Naive thymus-derived CD4-positive, alpha-beta T cell (primary cell): ENCODE measurements at regions of chr4 and their contacts with region 1.

Region 1: GRCh38 chr4:2172161-2172560 is 69.8 kb downstream of the HAUS3 start:
- DNase-seq: peak in 1 of 9 donors; percentile 30
- ATAC-seq: no peak
- H3K4me3 ChIP-seq: no peak overlapping the region
- H3K4me3 Mint-ChIP-seq: peak overlapping the region in 7 of 10 donors; percentile 13 to 76 (median 64)
- H3K27ac ChIP-seq: no peak overlapping the region
- H3K27ac Mint-ChIP-seq: peak overlapping the region in 5 of 9 donors; percentile 1 to 93 (median 61)
- H3K4me1 ChIP-seq: peaks cover 0 to 8% of the 10 kb centered on the region in 2 donors
- H3K4me1 Mint-ChIP-seq: peaks cover 8 to 86% (median 25%) of the 10 kb centered on the region in 7 donors
- H3K27me3 ChIP-seq: no peaks in the 10 kb centered on the region
- H3K27me3 Mint-ChIP-seq: no peaks in the 10 kb centered on the region

Region 2: DNA sequence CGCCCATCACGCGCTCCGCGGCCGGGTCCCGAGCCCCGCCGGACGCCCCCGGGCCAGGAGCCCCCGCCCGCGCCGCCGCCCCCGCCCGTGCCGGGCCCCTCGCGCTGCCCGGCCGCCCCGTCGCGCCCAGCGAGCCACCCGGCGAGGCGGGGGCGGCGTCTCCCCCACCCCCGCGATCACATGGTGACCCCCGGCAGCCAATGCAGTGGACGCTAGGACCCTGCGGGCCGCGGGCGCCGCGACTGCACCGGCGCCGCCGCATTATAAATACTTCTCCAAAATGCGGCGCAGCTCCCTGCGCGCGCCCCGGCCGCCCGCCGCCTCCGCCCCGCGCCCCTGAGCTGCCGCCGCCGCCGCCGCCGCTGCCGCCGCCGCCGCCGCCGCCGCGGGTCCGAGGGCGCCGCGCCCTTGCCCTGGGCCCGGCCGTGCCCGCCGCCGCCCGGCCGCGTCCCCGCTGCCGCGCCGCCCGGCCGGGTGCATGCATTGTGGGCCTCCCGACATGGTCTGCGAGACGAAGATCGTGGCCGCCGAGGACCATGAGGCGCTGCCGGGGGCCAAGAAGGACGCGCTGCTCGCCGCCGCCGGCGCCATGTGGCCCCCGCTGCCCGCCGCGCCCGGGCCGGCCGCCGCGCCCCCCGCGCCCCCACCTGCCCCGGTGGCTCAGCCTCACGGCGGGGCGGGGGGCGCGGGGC is 113.0 kb before region 1 on chr4 and contains the start of gene NAT8L:
- CTCF ChIA-PET with region 1: no interaction called
- POLR2A ChIA-PET with region 1: no interaction called
- intact Hi-C with region 1: loop called in 1 of 2 experiments (anchors 5 kb)
- DNase-seq: peak in 1 of 9 donors; percentile 59
- ATAC-seq: peak; percentile 55
- H3K4me3 ChIP-seq: no peak within 1 kb of the TSS
- H3K4me3 Mint-ChIP-seq: peak within 1 kb of the TSS in 7 of 10 donors; percentile 17 to 70 (median 38)
- H3K27ac ChIP-seq: no peak within 1 kb of the TSS
- H3K27ac Mint-ChIP-seq: no peak within 1 kb of the TSS
- H3K4me1 ChIP-seq: no peaks in the 10 kb centered on the region
- H3K4me1 Mint-ChIP-seq: peaks cover 0 to 6% (median 0%) of the 10 kb centered on the region in 7 donors
- H3K27me3 ChIP-seq: peaks cover 0 to 3% of the 10 kb centered on the region in 2 donors
- H3K27me3 Mint-ChIP-seq: peaks cover 22 to 40% (median 29%) of the 10 kb centered on the region in 5 donors
- total RNA-seq, gene NAT8L: 0.11 to 7.2 (median 0.24) TPM in 3 of 5 experiments, not detected in the others

Region 3: DNA sequence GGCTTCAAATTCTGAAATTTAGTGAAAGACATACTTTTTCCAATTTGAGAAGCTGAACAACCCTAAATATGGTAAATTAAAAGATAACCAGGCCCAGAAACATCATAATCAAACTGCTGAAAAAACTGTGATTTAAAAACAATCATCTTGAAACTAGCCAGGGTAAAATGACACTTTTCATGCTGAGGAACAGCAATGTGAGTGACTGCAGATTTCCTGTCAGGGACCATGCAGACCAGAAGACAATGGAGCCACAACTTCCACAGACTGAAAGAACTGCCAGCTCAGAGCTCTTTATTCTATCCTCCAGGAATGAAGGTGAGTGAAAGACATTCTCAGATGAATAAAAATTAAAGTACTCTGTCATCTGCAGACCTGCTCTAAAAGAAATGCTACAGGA is 39.7 kb before region 1 on chr4:
- CTCF ChIA-PET with region 1: no interaction called
- POLR2A ChIA-PET with region 1: no interaction called
- intact Hi-C with region 1: loop called in 1 of 2 experiments (anchors 2 kb)
- DNase-seq: no peak
- ATAC-seq: no peak
- H3K4me3 ChIP-seq: no peak overlapping the region
- H3K4me3 Mint-ChIP-seq: no peak overlapping the region
- H3K27ac ChIP-seq: no peak overlapping the region
- H3K27ac Mint-ChIP-seq: peak overlapping the region in 1 of 9 donors; percentile 13
- H3K4me1 ChIP-seq: peaks cover 0 to 14% of the 10 kb centered on the region in 2 donors
- H3K4me1 Mint-ChIP-seq: peaks cover 10 to 38% (median 20%) of the 10 kb centered on the region in 7 donors
- H3K27me3 ChIP-seq: no peaks in the 10 kb centered on the region
- H3K27me3 Mint-ChIP-seq: peaks cover 0 to 2% (median 0%) of the 10 kb centered on the region in 5 donors

Region 4: GRCh38 chr4:2154215-2154740 is 17.9 kb before region 1 on chr4:
- CTCF ChIA-PET with region 1: no interaction called
- POLR2A ChIA-PET with region 1: no interaction called
- intact Hi-C with region 1: no loop called
- DNase-seq: no peak
- ATAC-seq: no peak
- H3K4me3 ChIP-seq: no peak overlapping the region
- H3K4me3 Mint-ChIP-seq: no peak overlapping the region
- H3K27ac ChIP-seq: no peak overlapping the region
- H3K27ac Mint-ChIP-seq: no peak overlapping the region
- H3K4me1 ChIP-seq: no peaks in the 10 kb centered on the region
- H3K4me1 Mint-ChIP-seq: peaks cover 0 to 1% (median 0%) of the 10 kb centered on the region in 7 donors
- H3K27me3 ChIP-seq: no peaks in the 10 kb centered on the region
- H3K27me3 Mint-ChIP-seq: peaks cover 0 to 12% (median 0%) of the 10 kb centered on the region in 5 donors

Region 5: DNA sequence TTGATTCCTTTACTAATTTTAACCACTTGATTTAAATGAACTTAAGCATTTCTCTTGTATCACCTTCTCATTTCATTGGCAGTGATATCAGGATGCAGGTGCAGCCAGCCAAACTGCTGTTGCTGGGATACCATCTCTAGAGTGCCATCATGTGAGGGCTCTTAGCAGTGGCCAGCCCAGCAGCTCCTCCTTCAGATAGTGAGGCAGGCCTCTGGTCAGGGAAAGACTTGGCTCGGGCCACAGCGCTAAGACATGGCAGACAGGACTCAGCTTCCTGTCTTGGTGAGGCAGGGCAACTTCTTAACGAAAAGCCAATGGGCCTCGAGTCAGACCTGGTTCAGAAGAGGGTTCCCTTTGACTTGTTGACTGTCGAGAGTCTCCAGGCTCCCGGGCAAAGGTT is 741.0 kb after region 1 on chr4:
- CTCF ChIA-PET with region 1: no interaction called
- POLR2A ChIA-PET with region 1: no interaction called
- intact Hi-C with region 1: no loop called
- DNase-seq: no peak
- ATAC-seq: no peak
- H3K4me3 ChIP-seq: no peak overlapping the region
- H3K4me3 Mint-ChIP-seq: no peak overlapping the region
- H3K27ac ChIP-seq: no peak overlapping the region
- H3K27ac Mint-ChIP-seq: peak overlapping the region in 1 of 9 donors; percentile 33
- H3K4me1 ChIP-seq: no peaks in the 10 kb centered on the region
- H3K4me1 Mint-ChIP-seq: peaks cover 6 to 22% (median 16%) of the 10 kb centered on the region in 7 donors
- H3K27me3 ChIP-seq: no peaks in the 10 kb centered on the region
- H3K27me3 Mint-ChIP-seq: no peaks in the 10 kb centered on the region